CD4-positive, alpha-beta T cell (primary cell): ENCODE measurements at regions of chr4 and their contacts with region 1.

Region 1: GRCh38 chr4:173334085-173334772 is at the start of gene HMGB2:
- DNase-seq: peak; percentile 99 to 100 (median 100)
- ATAC-seq: peak; percentile 92
- H3K4me3 ChIP-seq: peak within 1 kb of the TSS; percentile 88
- H3K4me3 Mint-ChIP-seq: peak within 1 kb of the TSS; percentile 98
- H3K27ac ChIP-seq: peak within 1 kb of the TSS; percentile 78 to 93
- H3K27ac Mint-ChIP-seq: peak within 1 kb of the TSS; percentile 96
- H3K4me1 ChIP-seq: peaks cover 16% of the 10 kb centered on the region
- H3K4me1 Mint-ChIP-seq: peaks cover 37% of the 10 kb centered on the region
- H3K27me3 ChIP-seq: no peaks in the 10 kb centered on the region
- H3K27me3 Mint-ChIP-seq: peaks cover 13% of the 10 kb centered on the region
- CTCF ChIP-seq: no peak
- total RNA-seq, gene HMGB2: 228 to 232 TPM

Region 2: GRCh38 chr4:173257732-173258717 is 76.2 kb before region 1 on chr4:
- CTCF ChIA-PET with region 1: no interaction called
- POLR2A ChIA-PET with region 1: no interaction called
- intact Hi-C with region 1: no loop called
- DNase-seq: peak; percentile 14 to 75 (median 50)
- ATAC-seq: peak; percentile 70
- H3K4me3 ChIP-seq: no peak overlapping the region
- H3K4me3 Mint-ChIP-seq: no peak overlapping the region
- H3K27ac ChIP-seq: no peak overlapping the region
- H3K27ac Mint-ChIP-seq: no peak overlapping the region
- H3K4me1 ChIP-seq: no peaks in the 10 kb centered on the region
- H3K4me1 Mint-ChIP-seq: peaks cover 14% of the 10 kb centered on the region
- H3K27me3 ChIP-seq: no peaks in the 10 kb centered on the region
- H3K27me3 Mint-ChIP-seq: no peaks in the 10 kb centered on the region
- CTCF ChIP-seq: peak; percentile 65

Region 3: GRCh38 chr4:173346074-173346473 is 11.8 kb after region 1 on chr4:
- CTCF ChIA-PET with region 1: no interaction called
- POLR2A ChIA-PET with region 1: interaction called, 20 read pairs
- intact Hi-C with region 1: no loop called
- DNase-seq: no peak
- ATAC-seq: no peak
- H3K4me3 ChIP-seq: no peak overlapping the region
- H3K4me3 Mint-ChIP-seq: no peak overlapping the region
- H3K27ac ChIP-seq: no peak overlapping the region
- H3K27ac Mint-ChIP-seq: no peak overlapping the region
- H3K4me1 ChIP-seq: no peaks in the 10 kb centered on the region
- H3K4me1 Mint-ChIP-seq: no peaks in the 10 kb centered on the region
- H3K27me3 ChIP-seq: no peaks in the 10 kb centered on the region
- H3K27me3 Mint-ChIP-seq: peaks cover 4% of the 10 kb centered on the region
- CTCF ChIP-seq: no peak

Region 4: GRCh38 chr4:173370477-173371291 is 36.5 kb after region 1 on chr4 and contains the start of gene SAP30:
- CTCF ChIA-PET with region 1: interaction called, 4 read pairs
- POLR2A ChIA-PET with region 1: interaction called, 373 read pairs
- intact Hi-C with region 1: loop called (anchors 1 kb)
- DNase-seq: peak; percentile 94 to 98 (median 98)
- ATAC-seq: peak; percentile 86
- H3K4me3 ChIP-seq: peak within 1 kb of the TSS; percentile 96
- H3K4me3 Mint-ChIP-seq: peak within 1 kb of the TSS; percentile 98
- H3K27ac ChIP-seq: peak within 1 kb of the TSS; percentile 58 to 88
- H3K27ac Mint-ChIP-seq: peak within 1 kb of the TSS; percentile 87
- H3K4me1 ChIP-seq: peaks cover 27% of the 10 kb centered on the region
- H3K4me1 Mint-ChIP-seq: peaks cover 37% of the 10 kb centered on the region
- H3K27me3 ChIP-seq: no peaks in the 10 kb centered on the region
- H3K27me3 Mint-ChIP-seq: peaks cover 27% of the 10 kb centered on the region
- CTCF ChIP-seq: no peak
- total RNA-seq, gene SAP30: 2.5 to 3.9 TPM

Region 5: GRCh38 chr4:174282836-174283506 is 948.7 kb after region 1 on chr4:
- CTCF ChIA-PET with region 1: no interaction called
- POLR2A ChIA-PET with region 1: interaction called, 12 read pairs
- intact Hi-C with region 1: loop called (anchors 10 kb)
- DNase-seq: peak in 13 of 14 experiments; percentile 57 to 93 (median 68)
- ATAC-seq: peak; percentile 92
- H3K4me3 ChIP-seq: peak overlapping the region; percentile 91
- H3K4me3 Mint-ChIP-seq: peak overlapping the region; percentile 95
- H3K27ac ChIP-seq: peak overlapping the region; percentile 95 to 99
- H3K27ac Mint-ChIP-seq: peak overlapping the region; percentile 99
- H3K4me1 ChIP-seq: peaks cover 11% of the 10 kb centered on the region
- H3K4me1 Mint-ChIP-seq: peaks cover 90% of the 10 kb centered on the region
- H3K27me3 ChIP-seq: no peaks in the 10 kb centered on the region
- H3K27me3 Mint-ChIP-seq: no peaks in the 10 kb centered on the region
- CTCF ChIP-seq: no peak